Heart right ventricle (tissue), 16 donors: ENCODE measurements at regions of chr11 and their contacts with region 1.

Region 1: DNA sequence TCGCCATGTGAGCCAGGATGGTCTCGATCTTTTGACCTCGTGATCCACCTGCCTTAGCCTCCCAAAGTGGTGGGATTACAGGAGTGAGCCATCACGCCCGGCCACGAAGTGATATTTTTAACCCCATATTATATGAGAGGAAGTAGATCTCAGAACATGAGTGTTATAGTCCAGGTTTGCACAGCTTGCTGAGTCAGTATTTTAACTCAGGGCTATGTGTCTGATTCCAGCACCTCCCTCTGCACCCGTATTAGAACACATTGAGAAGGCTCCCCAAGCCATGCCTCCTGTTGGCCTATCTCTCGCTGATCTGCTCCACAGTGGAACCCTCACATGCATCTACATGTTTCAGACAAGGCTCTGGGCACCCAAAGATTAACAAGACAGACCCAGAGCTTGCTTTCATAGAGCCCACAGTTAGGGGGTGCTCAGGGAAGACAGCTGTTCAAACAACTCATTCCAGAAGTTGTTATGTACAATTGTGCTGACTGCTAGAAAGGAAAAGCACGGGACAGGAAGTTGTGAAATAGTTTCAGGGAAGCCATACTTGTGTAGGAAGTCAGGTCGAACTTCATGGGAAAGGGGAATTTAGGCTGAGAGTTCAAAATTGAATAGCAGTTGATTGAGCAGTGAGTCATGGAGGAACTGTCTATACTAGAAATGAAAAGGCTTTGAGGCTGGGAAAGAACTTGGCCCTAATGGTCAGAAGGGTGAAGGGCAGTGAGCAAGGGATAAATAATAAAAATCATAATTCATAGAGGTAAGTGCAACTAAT is 49.3 kb upstream of the CLPB start:
- DNase-seq: peak in 1 of 2 donors; percentile 34
- ATAC-seq: peak in 7 of 8 donors; percentile 51 to 74 (median 66)
- H3K4me3 ChIP-seq: no peak overlapping the region
- H3K27ac ChIP-seq: peak overlapping the region in 5 of 10 donors; percentile 25 to 87 (median 35)
- H3K4me1 ChIP-seq: peaks cover 0 to 29% (median 0%) of the 10 kb centered on the region in 9 donors
- H3K27me3 ChIP-seq: peaks cover 0 to 40% (median 4%) of the 10 kb centered on the region in 7 donors
- CTCF ChIP-seq: no peak

Region 2: DNA sequence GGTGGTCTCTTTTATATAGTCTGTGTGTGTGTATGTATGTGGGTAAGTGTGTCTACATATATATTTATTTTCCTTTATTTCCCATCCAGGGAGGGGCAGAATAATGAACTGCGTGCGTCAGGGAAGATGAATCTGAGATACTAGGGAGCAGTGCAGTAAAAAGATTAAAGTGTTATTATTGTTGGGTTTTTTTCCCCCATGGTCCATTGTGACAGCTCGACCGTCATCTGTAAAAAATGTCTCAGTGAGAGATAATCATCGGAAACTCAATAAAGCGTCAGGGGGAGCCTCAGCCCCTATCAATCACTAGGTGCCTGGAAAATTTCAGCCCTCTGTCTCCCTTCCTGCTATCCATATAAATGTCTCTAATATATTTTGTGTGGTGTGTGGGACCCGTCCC is 113.9 kb before region 1 on chr11:
- intact Hi-C with region 1: no loop called
- DNase-seq: no peak
- ATAC-seq: no peak
- H3K4me3 ChIP-seq: no peak overlapping the region
- H3K27ac ChIP-seq: no peak overlapping the region
- H3K4me1 ChIP-seq: no peaks in the 10 kb centered on the region
- H3K27me3 ChIP-seq: no peaks in the 10 kb centered on the region
- CTCF ChIP-seq: no peak

Region 3: DNA sequence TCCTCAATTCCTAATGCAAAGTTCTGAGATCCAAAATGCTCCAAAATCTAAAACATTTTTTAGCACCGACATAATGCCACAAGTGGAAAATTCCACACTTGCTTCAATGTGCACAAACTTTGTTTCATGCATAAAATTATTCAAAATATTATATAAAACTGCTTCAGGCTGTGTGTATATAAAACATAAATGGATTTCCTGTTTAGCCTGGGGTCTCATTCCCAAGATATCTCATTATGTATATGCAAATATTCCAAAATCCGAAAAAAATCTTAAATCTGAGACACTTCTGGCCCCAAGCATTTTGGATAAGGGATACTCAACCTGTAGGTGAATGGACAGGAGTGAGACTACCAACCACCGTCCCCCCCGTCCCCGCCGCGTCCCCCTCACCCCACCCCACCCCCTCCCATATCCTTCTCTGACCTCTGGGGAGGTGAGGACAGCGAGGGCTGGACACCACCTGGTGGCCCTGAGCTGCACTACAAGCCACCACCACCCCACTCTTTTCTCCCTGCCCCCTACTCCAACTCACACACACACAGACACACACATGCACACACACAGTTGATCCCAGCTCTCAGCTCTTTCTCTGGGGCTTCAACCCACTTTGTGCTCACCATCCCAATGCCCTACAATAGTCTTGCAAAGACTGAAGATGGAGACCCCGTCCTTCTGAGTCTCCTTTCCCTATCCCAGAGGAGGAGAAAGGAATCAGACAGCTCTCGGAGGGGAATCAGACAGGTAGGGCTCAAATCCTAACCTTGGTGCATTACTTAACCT is 89.7 kb after region 1 on chr11:
- intact Hi-C with region 1: loop called in 6 of 10 experiments (anchors 1 to 10 kb)
- DNase-seq: peak in 1 of 2 donors; percentile 49
- ATAC-seq: peak; percentile 55 to 75 (median 68)
- H3K4me3 ChIP-seq: no peak overlapping the region
- H3K27ac ChIP-seq: no peak overlapping the region
- H3K4me1 ChIP-seq: peaks cover 0 to 15% (median 0%) of the 10 kb centered on the region in 9 donors
- H3K27me3 ChIP-seq: peaks cover 0 to 3% (median 0%) of the 10 kb centered on the region in 7 donors
- CTCF ChIP-seq: peak; percentile 31 to 63 (median 53)

Region 4: GRCh38 chr11:72642884-72643511 is 159.4 kb after region 1 on chr11:
- intact Hi-C with region 1: loop called in 5 of 10 experiments (anchors 5 to 10 kb)
- DNase-seq: peak; percentile 38 to 73
- ATAC-seq: peak; percentile 70 to 82 (median 79)
- H3K4me3 ChIP-seq: peak overlapping the region; percentile 58 to 75 (median 72)
- H3K27ac ChIP-seq: peak overlapping the region in 9 of 10 donors; percentile 2 to 84 (median 59)
- H3K4me1 ChIP-seq: peaks cover 6 to 48% (median 25%) of the 10 kb centered on the region in 9 donors
- H3K27me3 ChIP-seq: peaks cover 0 to 44% (median 0%) of the 10 kb centered on the region in 7 donors
- CTCF ChIP-seq: peak; percentile 95 to 100 (median 99)